ENCODE measurements at regions of chrX and their contacts with region 1.

Region 1: GRCh38 chrX:106481341-106481740 is 130.4 kb upstream of the RADX start:
- DNase-seq: no peak
- H3K4me3 ChIP-seq: no peak overlapping the region
- H3K27ac ChIP-seq: no peak overlapping the region
- H3K4me1 ChIP-seq: no peaks in the 10 kb centered on the region
- H3K27me3 ChIP-seq: no peaks in the 10 kb centered on the region
- CTCF ChIP-seq: peak; percentile 63 to 80 (median 72)
- POLR2A ChIP-seq: no peak

Region 2: DNA sequence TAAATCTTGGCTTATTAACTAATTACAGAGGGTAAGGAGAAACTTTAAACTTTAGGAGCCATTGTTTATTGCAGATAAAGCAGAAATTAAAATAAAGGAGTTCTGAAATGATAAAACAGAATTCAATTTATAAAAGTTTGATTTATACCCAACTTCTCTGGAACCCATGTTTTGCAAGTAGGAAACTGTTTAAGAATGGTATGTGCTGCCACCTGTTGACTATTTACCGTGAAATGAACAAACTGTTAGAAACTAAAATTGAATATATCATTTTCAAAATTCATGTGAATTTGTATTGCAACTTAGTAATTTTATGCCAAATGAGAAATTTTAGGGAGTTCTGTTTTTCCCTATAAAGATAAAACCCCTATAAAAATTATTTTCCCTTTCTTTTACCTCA is 310.2 kb after region 1 on chrX:
- intact Hi-C with region 1: loop called (anchors 10 kb)
- DNase-seq: no peak
- H3K4me3 ChIP-seq: no peak overlapping the region
- H3K27ac ChIP-seq: no peak overlapping the region
- H3K4me1 ChIP-seq: no peaks in the 10 kb centered on the region
- H3K27me3 ChIP-seq: no peaks in the 10 kb centered on the region
- CTCF ChIP-seq: peak in 3 of 6 experiments; percentile 11 to 43 (median 27)
- POLR2A ChIP-seq: no peak

Region 3: GRCh38 chrX:106933041-106933961 is 452.0 kb after region 1 on chrX:
- intact Hi-C with region 1: no loop called
- DNase-seq: no peak
- H3K4me3 ChIP-seq: no peak overlapping the region
- H3K27ac ChIP-seq: no peak overlapping the region
- H3K4me1 ChIP-seq: no peaks in the 10 kb centered on the region
- H3K27me3 ChIP-seq: no peaks in the 10 kb centered on the region
- CTCF ChIP-seq: no peak
- POLR2A ChIP-seq: no peak

Measured in esophagus squamous epithelium (tissue), 5 donors.